B cell (primary cell): ENCODE measurements at regions of chr11 and their contacts with region 1.

Region 1: DNA sequence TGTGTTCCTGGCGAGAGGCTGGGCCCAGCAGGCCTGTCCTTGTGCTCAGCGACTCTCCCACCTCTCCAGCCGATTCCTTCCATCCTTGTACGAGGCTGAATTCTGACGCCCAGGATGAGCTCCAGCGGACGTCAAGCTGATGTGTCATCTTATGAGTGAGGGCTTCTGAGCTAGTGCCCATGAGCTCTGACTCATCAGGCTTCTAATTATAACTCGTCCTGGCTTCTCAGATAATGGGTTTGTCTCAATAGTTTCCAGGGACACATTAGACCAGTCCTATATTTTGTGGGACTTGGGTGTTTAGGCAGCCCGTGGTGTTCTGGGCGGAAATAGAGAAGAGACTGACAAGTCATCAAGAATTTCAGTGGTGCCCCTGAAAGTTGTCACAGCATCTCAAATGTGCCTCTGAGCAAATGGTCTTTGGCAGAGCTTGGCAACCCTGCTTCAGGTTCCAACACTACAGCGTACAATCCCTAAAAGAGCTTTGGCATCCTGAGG is 108.2 kb upstream of the CD44 start:
- DNase-seq: no peak
- ATAC-seq: peak; percentile 19
- H3K4me3 ChIP-seq: no peak overlapping the region
- H3K4me3 Mint-ChIP-seq: peak overlapping the region; percentile 75
- H3K27ac ChIP-seq: no peak overlapping the region
- H3K27ac Mint-ChIP-seq: peak overlapping the region; percentile 81
- H3K4me1 ChIP-seq: peaks cover 18 to 25% of the 10 kb centered on the region in 2 donors
- H3K4me1 Mint-ChIP-seq: peaks cover 36% of the 10 kb centered on the region
- H3K27me3 ChIP-seq: no peaks in the 10 kb centered on the region
- H3K27me3 Mint-ChIP-seq: no peaks in the 10 kb centered on the region
- CTCF ChIP-seq: no peak

Region 2: DNA sequence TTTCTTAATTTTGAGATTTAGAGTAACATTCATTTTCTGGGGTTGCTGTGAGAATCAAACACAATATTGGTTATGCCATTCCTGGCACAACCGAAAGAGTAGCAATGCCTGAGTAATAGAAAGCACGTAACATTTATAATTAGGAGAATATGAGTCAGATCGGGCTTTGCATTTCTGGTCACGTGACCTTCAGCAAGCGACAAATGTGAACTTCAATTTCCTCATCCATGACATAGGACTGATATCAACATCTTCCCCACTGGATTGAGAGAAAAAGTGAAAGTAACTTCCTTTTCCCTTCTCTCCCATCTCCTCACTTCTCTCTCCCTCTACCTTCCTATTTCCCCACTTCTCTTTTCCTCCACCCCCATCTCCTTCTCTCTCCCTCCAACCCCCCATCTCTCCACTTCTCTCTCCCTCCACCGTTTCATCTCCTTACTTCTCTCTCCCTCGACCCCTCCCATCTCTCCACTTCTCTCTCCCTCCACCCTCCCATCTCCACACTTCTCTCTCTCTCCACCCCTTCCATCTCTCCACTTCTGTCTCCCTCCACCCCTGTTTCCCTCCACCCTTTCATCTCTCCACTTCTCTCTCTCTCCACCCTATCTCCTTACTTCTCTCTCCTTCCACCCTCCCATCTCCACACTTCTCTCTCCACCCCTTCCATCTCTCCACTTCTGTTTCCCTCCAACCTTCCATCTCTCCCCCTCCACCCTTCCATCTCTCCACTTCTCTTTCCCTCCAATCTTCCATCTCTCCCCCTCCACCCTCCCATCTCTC is 625.5 kb before region 1 on chr11:
- CTCF ChIA-PET with region 1: no interaction called
- POLR2A ChIA-PET with region 1: no interaction called
- intact Hi-C with region 1: no loop called
- DNase-seq: no peak
- ATAC-seq: no peak
- H3K4me3 ChIP-seq: no peak overlapping the region
- H3K4me3 Mint-ChIP-seq: no peak overlapping the region
- H3K27ac ChIP-seq: no peak overlapping the region
- H3K27ac Mint-ChIP-seq: no peak overlapping the region
- H3K4me1 ChIP-seq: no peaks in the 10 kb centered on the region
- H3K4me1 Mint-ChIP-seq: peaks cover 2% of the 10 kb centered on the region
- H3K27me3 ChIP-seq: peaks cover 0 to 5% (median 0%) of the 10 kb centered on the region in 4 experiments
- H3K27me3 Mint-ChIP-seq: peaks cover 36% of the 10 kb centered on the region
- CTCF ChIP-seq: no peak

Region 3: DNA sequence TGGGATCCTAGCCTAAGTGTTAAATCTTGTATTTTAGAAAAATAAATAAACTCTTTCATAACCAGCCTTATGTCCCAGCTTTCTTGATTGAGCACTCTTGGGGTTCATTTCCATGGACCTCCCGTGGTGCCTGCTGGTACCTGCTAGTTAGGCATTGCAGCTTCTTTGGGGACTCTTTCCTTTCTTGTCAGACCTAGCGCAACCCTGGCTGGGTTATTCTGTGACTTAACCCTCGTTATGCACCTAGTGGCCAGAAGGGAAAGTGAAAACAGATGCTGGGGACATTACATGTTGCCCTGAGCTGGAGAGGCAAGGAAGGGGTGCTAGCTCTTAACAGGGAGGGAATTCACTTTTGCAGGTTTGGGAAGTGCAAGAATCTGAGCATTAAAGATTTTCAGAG is 161.3 kb before region 1 on chr11:
- CTCF ChIA-PET with region 1: no interaction called
- POLR2A ChIA-PET with region 1: no interaction called
- intact Hi-C with region 1: no loop called
- DNase-seq: no peak
- ATAC-seq: no peak
- H3K4me3 ChIP-seq: no peak overlapping the region
- H3K4me3 Mint-ChIP-seq: no peak overlapping the region
- H3K27ac ChIP-seq: no peak overlapping the region
- H3K27ac Mint-ChIP-seq: no peak overlapping the region
- H3K4me1 ChIP-seq: peaks cover 0 to under 1% of the 10 kb centered on the region in 2 donors
- H3K4me1 Mint-ChIP-seq: peaks cover 2% of the 10 kb centered on the region
- H3K27me3 ChIP-seq: no peaks in the 10 kb centered on the region
- H3K27me3 Mint-ChIP-seq: no peaks in the 10 kb centered on the region
- CTCF ChIP-seq: no peak

Region 4: DNA sequence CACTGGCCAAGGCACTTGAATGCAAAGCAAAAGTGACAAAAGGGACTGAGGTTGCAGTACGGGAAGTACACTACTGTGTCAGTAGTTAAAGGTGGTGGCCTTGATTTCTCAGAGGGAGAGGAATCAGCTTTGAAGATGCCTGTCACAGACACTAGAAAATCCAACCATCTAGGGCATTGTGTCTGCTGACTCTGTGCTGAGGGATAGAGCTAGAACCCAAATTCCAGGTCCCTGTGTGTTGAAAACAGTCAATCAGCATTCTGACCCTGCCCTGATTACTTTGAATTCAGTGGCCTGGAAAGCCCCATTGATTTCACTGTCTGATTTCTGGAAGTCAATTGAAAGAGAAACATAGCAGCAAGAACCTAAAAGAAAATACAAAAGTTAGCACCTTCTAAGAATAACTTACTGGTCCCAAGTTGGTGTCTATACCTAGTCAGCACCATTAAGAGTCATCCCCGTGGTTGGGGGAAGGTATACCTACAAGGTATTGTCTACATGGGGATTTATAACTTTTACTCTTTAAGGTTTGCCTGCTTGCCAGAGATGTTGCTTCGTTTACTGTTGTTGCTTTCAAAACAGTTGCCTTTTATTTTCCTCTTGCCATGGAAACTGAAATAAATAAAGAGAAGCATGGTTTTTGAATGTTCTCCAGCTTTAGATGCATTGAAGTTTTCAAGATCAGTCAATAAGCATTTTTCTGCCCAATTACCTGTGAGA is 17.1 kb before region 1 on chr11:
- CTCF ChIA-PET with region 1: interaction called, 4 read pairs
- POLR2A ChIA-PET with region 1: interaction called, 9 read pairs
- intact Hi-C with region 1: loop called (anchors 2 kb)
- DNase-seq: peak; percentile 70
- ATAC-seq: peak; percentile 60
- H3K4me3 ChIP-seq: peak overlapping the region in 1 of 5 experiments; percentile 0
- H3K4me3 Mint-ChIP-seq: peak overlapping the region; percentile 84
- H3K27ac ChIP-seq: peak overlapping the region; percentile 65 to 88
- H3K27ac Mint-ChIP-seq: peak overlapping the region; percentile 90
- H3K4me1 ChIP-seq: peaks cover 23 to 26% of the 10 kb centered on the region in 2 donors
- H3K4me1 Mint-ChIP-seq: peaks cover 27% of the 10 kb centered on the region
- H3K27me3 ChIP-seq: no peaks in the 10 kb centered on the region
- H3K27me3 Mint-ChIP-seq: no peaks in the 10 kb centered on the region
- CTCF ChIP-seq: no peak

Region 5: GRCh38 chr11:35363854-35364780 is 333.4 kb after region 1 on chr11:
- CTCF ChIA-PET with region 1: no interaction called
- POLR2A ChIA-PET with region 1: no interaction called
- intact Hi-C with region 1: no loop called
- DNase-seq: no peak
- ATAC-seq: no peak
- H3K4me3 ChIP-seq: no peak overlapping the region
- H3K4me3 Mint-ChIP-seq: no peak overlapping the region
- H3K27ac ChIP-seq: no peak overlapping the region
- H3K27ac Mint-ChIP-seq: no peak overlapping the region
- H3K4me1 ChIP-seq: no peaks in the 10 kb centered on the region
- H3K4me1 Mint-ChIP-seq: no peaks in the 10 kb centered on the region
- H3K27me3 ChIP-seq: peaks cover 0 to 3% (median 0%) of the 10 kb centered on the region in 4 experiments
- H3K27me3 Mint-ChIP-seq: no peaks in the 10 kb centered on the region
- CTCF ChIP-seq: no peak